Mammary epithelial cell (primary cell): ENCODE measurements at regions of chr2 and their contacts with region 1.

Region 1: DNA sequence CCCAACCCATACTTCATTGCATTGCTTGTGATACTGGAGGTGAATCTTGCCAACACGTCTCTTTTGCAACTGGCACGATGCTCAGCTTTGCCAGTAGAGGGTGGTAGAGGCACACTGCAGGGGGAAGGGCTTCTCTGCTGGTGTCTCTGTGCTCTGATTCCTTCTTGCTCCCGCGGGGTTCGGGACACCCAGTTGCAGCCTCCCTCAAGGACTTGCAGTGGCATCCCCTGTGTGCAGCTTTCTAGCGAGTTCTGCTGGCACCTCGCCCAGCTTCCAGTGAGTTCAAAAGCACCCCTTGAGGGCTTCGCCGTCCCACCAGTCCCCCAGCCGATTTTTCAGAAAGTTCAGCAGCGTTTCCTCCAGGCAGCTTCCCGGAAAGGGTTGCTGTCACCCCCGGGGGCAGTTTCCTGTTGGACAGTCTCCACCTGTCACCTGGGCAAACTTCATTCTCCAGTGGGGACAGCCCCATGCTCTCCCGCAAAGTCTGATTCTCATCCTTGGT is 35.3 kb upstream of the EN1 start:
- DNase-seq: peak; percentile 56
- H3K4me3 ChIP-seq: peak overlapping the region in 1 of 3 experiments; percentile 32
- H3K27ac ChIP-seq: no peak overlapping the region
- H3K4me1 ChIP-seq: peaks cover 10% of the 10 kb centered on the region
- H3K27me3 ChIP-seq: peaks cover 4% of the 10 kb centered on the region
- CTCF ChIP-seq: peak; percentile 100

Region 2: DNA sequence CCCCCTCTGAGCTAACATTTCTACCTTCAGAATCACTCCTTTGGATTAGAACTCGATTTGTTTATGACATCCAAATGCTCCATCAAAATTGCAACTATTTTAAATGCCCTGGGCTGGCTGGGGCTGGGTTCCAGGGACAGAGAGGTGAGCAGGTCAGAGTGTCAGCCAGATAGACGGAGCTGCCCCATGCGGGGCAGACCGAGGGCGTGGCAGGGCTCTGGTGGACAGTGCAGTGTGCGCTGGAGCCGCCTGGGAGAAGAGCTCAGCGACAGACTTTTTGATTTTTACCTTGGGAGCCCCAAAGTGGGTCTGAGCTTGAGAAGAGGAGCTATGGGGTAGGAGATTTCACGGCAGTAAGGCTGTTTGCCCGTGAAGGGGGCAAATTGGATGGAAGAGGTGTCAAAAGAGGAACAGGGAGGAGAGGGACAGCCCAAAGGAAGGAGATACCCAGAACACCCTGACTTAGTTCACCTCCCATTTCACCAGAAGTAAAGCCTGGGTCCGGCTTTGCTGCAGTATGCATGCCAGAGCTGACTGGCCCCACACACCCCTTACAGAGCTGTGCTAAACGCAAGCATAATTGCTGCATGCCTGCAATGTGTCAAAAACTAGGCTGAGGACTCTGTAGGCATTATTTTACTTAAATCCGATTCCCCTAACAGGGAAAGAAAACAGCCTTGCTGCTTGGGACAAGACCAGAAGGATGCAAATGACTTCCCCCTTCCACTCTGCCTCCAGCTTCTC is 69.0 kb before region 1 on chr2:
- CTCF ChIA-PET with region 1: no interaction called
- dilution Hi-C with region 1: no loop called
- in situ Hi-C with region 1: no loop called
- intact Hi-C with region 1: no loop called
- DNase-seq: no peak
- H3K4me3 ChIP-seq: no peak overlapping the region
- H3K27ac ChIP-seq: no peak overlapping the region
- H3K4me1 ChIP-seq: no peaks in the 10 kb centered on the region
- H3K27me3 ChIP-seq: no peaks in the 10 kb centered on the region
- CTCF ChIP-seq: no peak

Region 3: GRCh38 chr2:119011162-119011909 is 128.6 kb after region 1 on chr2:
- CTCF ChIA-PET with region 1: interaction called, 3 read pairs
- dilution Hi-C with region 1: no loop called
- in situ Hi-C with region 1: loop called (anchors 5 to 10 kb)
- intact Hi-C with region 1: loop called (anchors 1 kb)
- DNase-seq: no peak
- H3K4me3 ChIP-seq: no peak overlapping the region
- H3K27ac ChIP-seq: no peak overlapping the region
- H3K4me1 ChIP-seq: no peaks in the 10 kb centered on the region
- H3K27me3 ChIP-seq: peaks cover 16% of the 10 kb centered on the region
- CTCF ChIP-seq: peak; percentile 45 to 77

Region 4: GRCh38 chr2:119264781-119265692 is 382.3 kb after region 1 on chr2:
- CTCF ChIA-PET with region 1: no interaction called
- dilution Hi-C with region 1: no loop called
- in situ Hi-C with region 1: loop called in 1 of 2 experiments (anchors 10 kb)
- intact Hi-C with region 1: loop called (anchors 1 kb)
- DNase-seq: peak; percentile 53
- H3K4me3 ChIP-seq: no peak overlapping the region
- H3K27ac ChIP-seq: no peak overlapping the region
- H3K4me1 ChIP-seq: no peaks in the 10 kb centered on the region
- H3K27me3 ChIP-seq: no peaks in the 10 kb centered on the region
- CTCF ChIP-seq: peak; percentile 88 to 94

Region 5: DNA sequence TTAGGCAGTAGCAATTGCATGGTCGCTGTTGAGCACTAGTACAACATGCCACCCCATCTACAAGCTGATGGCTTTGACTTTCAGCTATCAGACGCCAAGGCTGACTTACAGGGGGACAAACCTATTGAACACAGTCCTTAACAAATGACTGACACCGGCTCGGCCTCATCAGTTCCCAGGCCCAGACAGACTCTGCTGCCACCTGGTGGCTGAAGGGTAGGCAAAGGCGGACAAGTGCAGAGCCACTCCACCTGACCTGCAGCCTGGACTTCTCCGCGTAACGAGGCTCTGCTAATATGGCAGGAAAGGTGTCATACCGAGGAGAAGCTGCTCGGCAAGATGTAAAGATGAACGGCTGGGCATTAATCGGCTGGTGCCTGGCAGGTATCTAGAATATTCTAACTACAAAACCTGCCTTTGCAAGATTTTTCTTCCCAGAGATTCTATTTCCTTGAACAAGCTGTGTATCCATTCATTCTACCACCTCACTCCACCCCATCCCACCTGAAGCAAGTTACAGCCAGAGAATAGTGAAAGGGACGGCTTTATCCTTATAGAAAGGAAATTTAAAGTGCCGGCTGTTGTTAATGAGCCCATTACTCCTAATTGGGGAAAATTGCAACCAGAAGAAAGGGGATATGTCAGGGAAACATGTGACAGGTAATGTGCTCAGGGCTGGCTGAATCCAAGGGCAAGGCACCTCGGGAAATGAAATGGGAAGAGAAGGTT is 408.3 kb after region 1 on chr2:
- CTCF ChIA-PET with region 1: no interaction called
- dilution Hi-C with region 1: no loop called
- in situ Hi-C with region 1: loop called in 1 of 2 experiments (anchors 10 kb)
- intact Hi-C with region 1: loop called (anchors 1 kb)
- DNase-seq: peak; percentile 12
- H3K4me3 ChIP-seq: no peak overlapping the region
- H3K27ac ChIP-seq: no peak overlapping the region
- H3K4me1 ChIP-seq: no peaks in the 10 kb centered on the region
- H3K27me3 ChIP-seq: no peaks in the 10 kb centered on the region
- CTCF ChIP-seq: peak; percentile 24 to 64

Region 6: GRCh38 chr2:119641562-119642258 is 759.0 kb after region 1 on chr2:
- CTCF ChIA-PET with region 1: no interaction called
- dilution Hi-C with region 1: no loop called
- in situ Hi-C with region 1: no loop called
- intact Hi-C with region 1: loop called (anchors 10 kb)
- DNase-seq: peak; percentile 67
- H3K4me3 ChIP-seq: no peak overlapping the region
- H3K27ac ChIP-seq: no peak overlapping the region
- H3K4me1 ChIP-seq: no peaks in the 10 kb centered on the region
- H3K27me3 ChIP-seq: peaks cover 2% of the 10 kb centered on the region
- CTCF ChIP-seq: peak; percentile 98